Activated naive CD4-positive, alpha-beta T cell treated with anti-CD3 and anti-CD28 coated beads for 36 hours (primary cell): ENCODE measurements at regions of chr2 and their contacts with region 1.

Region 1: GRCh38 chr2:9984217-9984739 is 32.8 kb downstream of the GRHL1 start:
- DNase-seq: peak; percentile 48
- H3K4me3 Mint-ChIP-seq: no peak overlapping the region
- H3K27ac Mint-ChIP-seq: no peak overlapping the region
- H3K4me1 Mint-ChIP-seq: peaks cover 15% of the 10 kb centered on the region
- H3K27me3 Mint-ChIP-seq: no peaks in the 10 kb centered on the region

Region 2: DNA sequence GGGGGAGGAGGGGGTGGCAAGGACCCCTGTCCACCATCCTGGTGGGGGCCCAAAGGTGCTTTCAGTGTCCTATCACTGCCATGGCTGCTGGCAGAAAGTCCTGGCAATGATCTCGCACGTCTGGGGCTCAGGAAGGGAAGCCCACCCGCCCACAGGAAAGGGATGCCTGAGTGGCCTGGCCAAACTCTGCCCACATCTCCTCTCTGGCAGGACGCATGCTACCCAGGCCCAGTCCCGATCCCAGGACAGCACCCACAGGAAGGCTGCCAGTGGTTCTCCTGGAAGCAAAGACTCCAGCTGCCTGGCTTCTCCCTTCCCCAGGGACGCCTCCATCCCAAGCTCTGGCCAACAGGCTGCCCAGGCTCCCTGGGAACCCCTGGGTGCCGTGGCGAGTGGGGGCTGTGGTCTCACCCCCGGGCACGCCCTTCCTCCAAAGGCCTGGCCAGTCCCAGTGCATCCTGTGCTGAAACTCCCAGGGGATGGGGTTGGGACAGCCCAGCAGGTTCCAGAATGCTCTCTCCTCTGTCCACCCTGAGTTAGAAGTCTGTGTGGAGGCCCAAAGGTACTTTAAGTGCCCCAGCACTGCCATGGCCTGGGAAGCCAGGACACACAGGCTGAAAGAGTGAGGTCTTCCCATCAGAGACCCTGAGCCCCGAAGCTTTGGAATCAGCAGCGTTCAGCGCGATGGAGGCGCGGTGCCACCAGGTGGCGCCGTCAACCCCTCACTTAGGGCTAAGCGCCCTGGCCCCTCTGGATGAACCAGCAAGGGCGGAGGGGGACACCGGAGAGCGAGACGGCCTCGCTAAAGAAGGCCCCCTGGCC is 170.8 kb before region 1 on chr2:
- CTCF ChIA-PET with region 1: interaction called, 15 read pairs
- intact Hi-C with region 1: loop called (anchors 2 kb)
- DNase-seq: peak; percentile 75
- H3K4me3 Mint-ChIP-seq: no peak overlapping the region
- H3K27ac Mint-ChIP-seq: no peak overlapping the region
- H3K4me1 Mint-ChIP-seq: peaks cover 12% of the 10 kb centered on the region
- H3K27me3 Mint-ChIP-seq: no peaks in the 10 kb centered on the region

Region 3: DNA sequence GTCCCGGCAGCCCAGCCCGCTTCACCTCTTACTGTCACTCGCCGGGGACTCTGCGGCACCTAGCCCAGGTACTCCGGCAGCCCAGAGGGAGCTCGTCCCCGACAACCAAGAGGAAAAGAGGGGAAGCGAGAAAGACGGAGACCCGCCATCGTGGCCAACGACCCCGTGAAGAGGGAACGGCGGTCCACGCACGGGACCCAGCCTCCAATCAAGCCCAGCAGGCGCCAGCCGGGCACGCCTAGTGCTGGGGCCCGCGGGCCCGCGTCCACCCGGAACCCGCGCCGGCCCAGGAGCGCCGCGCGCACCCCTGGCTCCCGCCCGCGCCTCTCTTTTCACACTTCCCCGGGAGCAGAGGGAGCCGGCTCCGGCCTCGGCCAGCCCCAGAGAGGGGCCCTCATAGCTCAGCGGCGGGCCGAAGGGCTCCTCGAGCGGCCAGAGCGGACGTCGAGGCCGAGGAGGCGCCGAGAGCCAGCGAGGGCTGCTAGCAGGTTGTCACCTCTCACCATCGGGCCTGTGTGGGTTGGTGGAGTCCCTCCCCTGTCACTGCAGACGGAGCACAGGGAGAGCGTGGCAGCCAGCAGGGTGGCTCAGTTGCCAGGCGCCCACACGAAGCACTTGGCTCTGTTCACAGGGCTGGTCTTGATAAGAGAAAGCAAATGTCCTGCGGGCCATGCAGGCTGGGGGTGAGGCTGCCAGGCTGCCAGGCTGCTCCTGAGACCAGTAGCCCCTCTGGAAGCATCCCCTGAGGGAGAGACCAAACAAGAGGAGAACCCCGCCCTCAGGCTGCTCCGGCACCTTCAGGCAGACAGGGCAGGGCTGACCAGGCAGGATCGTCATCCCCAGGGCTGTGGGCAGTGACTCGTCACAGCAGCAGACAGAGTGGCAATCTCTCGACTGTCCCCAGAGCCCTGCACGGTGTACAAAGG is 22.2 kb after region 1 on chr2:
- CTCF ChIA-PET with region 1: interaction called, 10 read pairs
- intact Hi-C with region 1: no loop called
- DNase-seq: peak; percentile 19
- H3K4me3 Mint-ChIP-seq: no peak overlapping the region
- H3K27ac Mint-ChIP-seq: no peak overlapping the region
- H3K4me1 Mint-ChIP-seq: no peaks in the 10 kb centered on the region
- H3K27me3 Mint-ChIP-seq: peaks cover 31% of the 10 kb centered on the region

Region 4: DNA sequence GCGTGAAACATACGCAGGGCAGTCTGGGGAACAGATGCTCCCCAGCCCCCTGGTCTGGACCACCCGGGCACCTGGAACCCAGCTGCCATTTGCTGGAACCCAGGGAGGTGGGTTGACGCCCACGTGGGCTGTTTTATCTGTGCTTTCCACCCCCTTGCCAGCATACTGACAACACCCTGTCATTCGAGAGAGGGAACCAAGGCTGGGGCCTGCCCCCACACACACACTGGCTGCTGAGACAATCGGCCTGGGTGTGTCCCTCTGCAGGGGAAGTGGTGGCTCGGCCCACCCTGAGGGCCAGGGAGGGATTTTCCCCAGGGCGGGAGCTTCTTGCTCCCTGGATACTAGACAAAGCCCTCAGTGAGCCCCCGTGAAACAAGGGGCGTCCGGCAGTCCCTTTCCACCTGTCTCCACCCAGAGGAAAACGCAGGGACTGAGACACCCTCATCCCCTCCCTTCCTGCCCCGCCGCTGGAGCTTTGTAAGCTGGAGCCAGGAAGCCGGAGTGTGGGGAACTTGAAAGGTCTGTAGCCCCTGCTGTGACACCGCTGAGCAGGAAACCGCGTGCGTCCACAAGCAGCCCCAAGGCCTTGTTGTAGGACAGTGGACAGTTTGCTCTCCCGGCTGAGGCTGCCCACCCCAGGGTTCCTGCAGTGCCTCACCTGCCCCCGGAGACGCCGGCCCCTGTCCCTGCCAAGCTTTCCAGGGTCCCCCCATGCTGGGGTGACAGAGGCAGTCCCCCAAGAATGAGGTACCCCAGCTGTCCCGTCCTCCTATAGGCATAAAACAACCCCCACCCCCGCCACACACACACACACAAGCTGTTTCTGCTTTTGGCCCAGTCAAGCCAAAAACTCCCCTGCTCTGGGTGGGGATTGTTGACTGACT is 45.0 kb after region 1 on chr2:
- CTCF ChIA-PET with region 1: interaction called, 15 read pairs
- intact Hi-C with region 1: no loop called
- DNase-seq: peak; percentile 77
- H3K4me3 Mint-ChIP-seq: no peak overlapping the region
- H3K27ac Mint-ChIP-seq: no peak overlapping the region
- H3K4me1 Mint-ChIP-seq: peaks cover 16% of the 10 kb centered on the region
- H3K27me3 Mint-ChIP-seq: no peaks in the 10 kb centered on the region